Pancreas (tissue), 10 donors: ENCODE measurements at regions of chr1 and their contacts with region 1.

Region 1: GRCh38 chr1:110106013-110106941 is 6.0 kb upstream of the UBL4B start:
- DNase-seq: peak; percentile 46 to 84 (median 74)
- ATAC-seq: peak; percentile 88 to 99 (median 96)
- H3K4me3 ChIP-seq: no peak overlapping the region
- H3K27ac ChIP-seq: no peak overlapping the region
- H3K4me1 ChIP-seq: no peaks in the 10 kb centered on the region
- H3K27me3 ChIP-seq: no peaks in the 10 kb centered on the region
- CTCF ChIP-seq: peak; percentile 82 to 90 (median 84)

Region 2: DNA sequence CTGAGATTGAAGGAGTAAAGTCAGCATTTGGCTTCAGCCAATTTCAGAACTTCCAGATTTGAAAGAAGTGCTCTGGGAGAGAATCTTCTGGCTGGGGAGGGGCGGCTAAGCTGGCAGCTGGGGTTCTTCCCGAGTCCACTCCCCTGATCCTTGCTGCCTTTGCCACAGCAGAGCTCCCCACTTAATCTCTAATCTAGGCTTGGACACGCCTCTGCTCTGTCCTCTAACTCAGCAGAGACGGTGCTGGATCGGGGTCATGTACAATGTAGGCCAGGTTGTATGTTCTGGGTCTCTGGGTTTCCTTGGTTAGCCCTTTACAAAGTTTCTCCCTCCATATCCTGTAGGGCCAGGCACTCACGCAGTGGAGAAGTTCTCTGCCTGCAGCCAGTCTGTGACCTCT is 355.4 kb before region 1 on chr1:
- intact Hi-C with region 1: no loop called
- DNase-seq: peak in 1 of 6 donors; percentile 5
- ATAC-seq: no peak
- H3K4me3 ChIP-seq: no peak overlapping the region
- H3K27ac ChIP-seq: no peak overlapping the region
- H3K4me1 ChIP-seq: no peaks in the 10 kb centered on the region
- H3K27me3 ChIP-seq: no peaks in the 10 kb centered on the region
- CTCF ChIP-seq: no peak

Region 3: GRCh38 chr1:110053557-110054428 is 52.5 kb before region 1 on chr1:
- intact Hi-C with region 1: loop called (anchors 5 to 10 kb)
- DNase-seq: peak; percentile 29 to 91 (median 72)
- ATAC-seq: peak; percentile 61 to 84 (median 83)
- H3K4me3 ChIP-seq: no peak overlapping the region
- H3K27ac ChIP-seq: no peak overlapping the region
- H3K4me1 ChIP-seq: no peaks in the 10 kb centered on the region
- H3K27me3 ChIP-seq: no peaks in the 10 kb centered on the region
- CTCF ChIP-seq: peak; percentile 92 to 95 (median 94)